Caco-2 (cell line): ENCODE measurements at regions of chr6 and their contacts with region 1.

Region 1: GRCh38 chr6:27188885-27189418 is 58.5 kb upstream of the PRSS16 start:
- DNase-seq: peak; percentile 59 to 82
- H3K4me3 ChIP-seq: peak overlapping the region; percentile 74
- H3K4me3 Mint-ChIP-seq: peak overlapping the region; percentile 98
- H3K27ac Mint-ChIP-seq: peak overlapping the region; percentile 98
- H3K4me1 ChIP-seq: peaks cover 16% of the 10 kb centered on the region
- H3K4me1 Mint-ChIP-seq: no peaks in the 10 kb centered on the region
- H3K27me3 ChIP-seq: no peaks in the 10 kb centered on the region
- H3K27me3 Mint-ChIP-seq: no peaks in the 10 kb centered on the region
- CTCF ChIP-seq: peak; percentile 54 to 86

Region 2: DNA sequence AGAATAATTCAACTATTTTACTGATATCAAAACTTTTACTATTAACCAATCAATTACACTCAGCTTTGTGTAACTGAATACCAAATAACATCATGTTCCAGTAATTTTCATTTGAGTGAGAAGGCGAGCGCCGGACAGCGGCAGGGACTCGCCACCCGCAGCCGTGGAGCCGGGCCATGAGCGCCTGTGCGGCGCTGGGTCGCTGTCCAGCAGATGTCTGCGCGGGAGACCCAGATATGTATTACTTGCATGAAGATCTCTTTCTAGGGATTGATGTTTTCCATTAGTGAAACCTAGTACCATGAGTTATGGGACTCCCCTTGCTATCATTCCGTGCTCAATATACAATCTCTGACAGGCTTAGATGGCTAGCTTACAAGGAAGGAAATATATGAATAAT is 186.5 kb before region 1 on chr6:
- CTCF ChIA-PET with region 1: no interaction called
- POLR2A ChIA-PET with region 1: no interaction called
- intact Hi-C with region 1: no loop called
- DNase-seq: no peak
- H3K4me3 ChIP-seq: no peak overlapping the region
- H3K4me3 Mint-ChIP-seq: no peak overlapping the region
- H3K27ac Mint-ChIP-seq: no peak overlapping the region
- H3K4me1 ChIP-seq: no peaks in the 10 kb centered on the region
- H3K4me1 Mint-ChIP-seq: no peaks in the 10 kb centered on the region
- H3K27me3 ChIP-seq: no peaks in the 10 kb centered on the region
- H3K27me3 Mint-ChIP-seq: no peaks in the 10 kb centered on the region
- CTCF ChIP-seq: no peak

Region 3: DNA sequence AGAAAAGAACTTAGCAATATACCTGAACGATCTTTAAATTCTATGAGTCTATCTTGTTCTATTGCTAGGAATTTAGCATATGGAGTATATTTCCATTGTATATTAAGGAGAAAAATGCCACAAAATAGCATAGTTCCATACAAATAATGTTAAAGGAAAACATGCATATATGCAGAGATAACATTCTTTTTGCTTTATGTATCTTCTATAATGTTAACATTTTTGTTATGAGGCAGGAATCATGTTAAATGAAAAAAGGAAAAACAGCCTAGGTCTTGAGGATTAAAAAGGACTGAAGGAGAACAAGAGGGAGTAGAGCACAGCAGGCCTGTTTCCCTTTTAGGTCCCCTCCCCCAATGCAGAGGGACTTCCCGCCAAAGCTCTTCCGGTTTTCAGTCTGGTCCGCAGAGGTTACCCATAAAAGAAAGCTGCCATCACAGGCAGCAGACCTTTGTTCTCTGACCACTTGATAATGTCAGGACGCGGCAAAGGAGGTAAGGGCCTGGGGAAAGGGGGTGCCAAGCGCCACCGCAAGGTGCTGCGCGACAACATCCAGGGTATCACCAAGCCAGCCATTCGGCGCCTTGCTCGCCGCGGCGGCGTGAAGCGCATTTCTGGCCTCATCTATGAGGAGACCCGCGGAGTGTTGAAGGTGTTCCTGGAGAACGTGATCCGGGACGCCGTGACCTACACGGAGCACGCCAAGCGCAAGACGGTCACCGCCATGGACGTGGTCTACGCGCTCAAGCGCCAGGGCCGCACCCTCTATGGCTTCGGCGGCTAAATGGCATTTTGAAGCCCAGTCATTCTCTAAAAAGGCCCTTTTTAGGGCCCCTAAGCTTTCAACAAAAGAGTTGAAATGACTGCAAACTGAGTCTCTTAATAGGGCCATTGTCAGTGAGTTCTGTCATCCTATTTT is 49.9 kb before region 1 on chr6:
- CTCF ChIA-PET with region 1: no interaction called
- POLR2A ChIA-PET with region 1: no interaction called
- intact Hi-C with region 1: no loop called
- DNase-seq: no peak
- H3K4me3 ChIP-seq: no peak overlapping the region
- H3K4me3 Mint-ChIP-seq: no peak overlapping the region
- H3K27ac Mint-ChIP-seq: peak overlapping the region; percentile 50
- H3K4me1 ChIP-seq: peaks cover 40% of the 10 kb centered on the region
- H3K4me1 Mint-ChIP-seq: peaks cover 14% of the 10 kb centered on the region
- H3K27me3 ChIP-seq: no peaks in the 10 kb centered on the region
- H3K27me3 Mint-ChIP-seq: no peaks in the 10 kb centered on the region
- CTCF ChIP-seq: no peak

Region 4: GRCh38 chr6:27177485-27178406 is 11.2 kb before region 1 on chr6:
- CTCF ChIA-PET with region 1: interaction called, 8 read pairs
- POLR2A ChIA-PET with region 1: interaction called, 19 read pairs
- intact Hi-C with region 1: loop called (anchors 1 kb)
- DNase-seq: peak; percentile 85 to 86
- H3K4me3 ChIP-seq: peak overlapping the region; percentile 94
- H3K4me3 Mint-ChIP-seq: peak overlapping the region; percentile 90
- H3K27ac Mint-ChIP-seq: peak overlapping the region; percentile 91
- H3K4me1 ChIP-seq: no peaks in the 10 kb centered on the region
- H3K4me1 Mint-ChIP-seq: peaks cover 6% of the 10 kb centered on the region
- H3K27me3 ChIP-seq: no peaks in the 10 kb centered on the region
- H3K27me3 Mint-ChIP-seq: no peaks in the 10 kb centered on the region
- CTCF ChIP-seq: peak; percentile 32 to 66

Region 5: DNA sequence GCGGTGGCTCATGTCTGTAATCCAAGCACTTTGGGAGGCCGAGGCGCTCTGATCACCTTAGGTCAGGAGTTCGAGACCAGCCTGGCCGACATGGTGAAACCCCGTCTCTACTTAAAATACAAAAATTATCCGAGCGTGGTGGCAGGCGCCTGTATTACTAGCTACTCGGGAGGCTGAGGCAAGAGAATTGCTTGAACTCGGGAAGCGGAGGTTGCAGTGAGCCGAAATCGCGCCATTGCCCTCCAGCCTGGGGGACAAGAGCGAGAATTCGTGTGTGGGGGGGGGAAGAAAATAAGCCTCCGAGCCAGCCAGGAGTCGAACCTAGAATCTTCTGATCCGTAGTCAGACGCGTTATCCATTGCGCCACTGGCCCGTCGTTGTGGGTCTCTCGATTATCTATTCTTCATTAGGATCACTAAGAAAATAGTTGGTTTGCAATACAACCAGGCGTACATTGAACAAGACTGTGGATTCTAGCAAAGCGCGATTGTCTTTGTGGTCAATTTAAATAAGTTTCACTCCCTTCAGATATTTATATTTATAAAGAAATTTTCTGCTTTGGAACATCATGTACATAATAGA is 24.7 kb after region 1 on chr6:
- CTCF ChIA-PET with region 1: no interaction called
- POLR2A ChIA-PET with region 1: no interaction called
- intact Hi-C with region 1: no loop called
- DNase-seq: no peak
- H3K4me3 ChIP-seq: no peak overlapping the region
- H3K4me3 Mint-ChIP-seq: no peak overlapping the region
- H3K27ac Mint-ChIP-seq: no peak overlapping the region
- H3K4me1 ChIP-seq: no peaks in the 10 kb centered on the region
- H3K4me1 Mint-ChIP-seq: no peaks in the 10 kb centered on the region
- H3K27me3 ChIP-seq: no peaks in the 10 kb centered on the region
- H3K27me3 Mint-ChIP-seq: no peaks in the 10 kb centered on the region
- CTCF ChIP-seq: no peak

Region 6: DNA sequence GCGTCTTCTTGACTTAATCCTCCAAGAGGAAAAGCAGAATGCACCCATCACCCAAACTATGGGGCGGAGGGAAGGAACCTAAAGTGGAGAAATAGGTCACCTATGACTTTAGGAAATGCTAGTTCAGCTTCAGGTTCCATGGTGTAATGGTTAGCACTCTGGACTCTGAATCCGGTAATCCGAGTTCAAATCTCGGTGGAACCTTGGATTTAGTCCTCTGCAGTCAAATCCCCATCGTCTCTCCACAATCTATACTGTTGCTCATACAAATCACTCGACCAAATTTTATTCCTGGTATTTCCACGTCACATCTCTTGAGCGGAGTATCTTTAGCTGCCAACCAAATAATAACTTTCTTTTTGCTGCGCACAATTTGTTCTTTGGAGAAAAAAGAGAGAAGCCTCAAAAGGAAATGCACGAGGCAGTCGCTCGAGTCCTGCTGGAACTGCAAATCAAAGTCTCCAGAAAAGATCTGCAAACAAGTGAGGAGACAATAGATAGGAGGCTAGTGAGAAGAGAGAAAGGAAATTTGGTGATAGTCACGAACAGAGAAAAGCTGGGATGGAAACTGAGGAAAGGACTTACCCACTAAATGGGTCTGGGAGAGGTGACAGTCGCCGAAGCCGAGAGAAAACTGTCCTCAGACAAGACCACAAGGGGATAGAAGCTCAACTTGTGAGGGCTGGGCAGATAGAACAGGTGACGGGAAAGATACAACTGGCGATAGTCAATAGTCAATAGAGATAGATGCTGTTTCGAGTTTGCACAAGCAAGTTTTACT is 106.5 kb after region 1 on chr6:
- CTCF ChIA-PET with region 1: no interaction called
- POLR2A ChIA-PET with region 1: interaction called, 9 read pairs
- intact Hi-C with region 1: loop called (anchors 5 kb)
- DNase-seq: peak; percentile 59 to 71
- H3K4me3 ChIP-seq: peak overlapping the region; percentile 41
- H3K4me3 Mint-ChIP-seq: peak overlapping the region; percentile 97
- H3K27ac Mint-ChIP-seq: peak overlapping the region; percentile 77
- H3K4me1 ChIP-seq: 0 out of 2 replicates have a peak, but pooled peaks cover 5% of the 10 kb centered on the region
- H3K4me1 Mint-ChIP-seq: peaks cover 16% of the 10 kb centered on the region
- H3K27me3 ChIP-seq: no peaks in the 10 kb centered on the region
- H3K27me3 Mint-ChIP-seq: peaks cover 7% of the 10 kb centered on the region
- CTCF ChIP-seq: no peak

Region 7: DNA sequence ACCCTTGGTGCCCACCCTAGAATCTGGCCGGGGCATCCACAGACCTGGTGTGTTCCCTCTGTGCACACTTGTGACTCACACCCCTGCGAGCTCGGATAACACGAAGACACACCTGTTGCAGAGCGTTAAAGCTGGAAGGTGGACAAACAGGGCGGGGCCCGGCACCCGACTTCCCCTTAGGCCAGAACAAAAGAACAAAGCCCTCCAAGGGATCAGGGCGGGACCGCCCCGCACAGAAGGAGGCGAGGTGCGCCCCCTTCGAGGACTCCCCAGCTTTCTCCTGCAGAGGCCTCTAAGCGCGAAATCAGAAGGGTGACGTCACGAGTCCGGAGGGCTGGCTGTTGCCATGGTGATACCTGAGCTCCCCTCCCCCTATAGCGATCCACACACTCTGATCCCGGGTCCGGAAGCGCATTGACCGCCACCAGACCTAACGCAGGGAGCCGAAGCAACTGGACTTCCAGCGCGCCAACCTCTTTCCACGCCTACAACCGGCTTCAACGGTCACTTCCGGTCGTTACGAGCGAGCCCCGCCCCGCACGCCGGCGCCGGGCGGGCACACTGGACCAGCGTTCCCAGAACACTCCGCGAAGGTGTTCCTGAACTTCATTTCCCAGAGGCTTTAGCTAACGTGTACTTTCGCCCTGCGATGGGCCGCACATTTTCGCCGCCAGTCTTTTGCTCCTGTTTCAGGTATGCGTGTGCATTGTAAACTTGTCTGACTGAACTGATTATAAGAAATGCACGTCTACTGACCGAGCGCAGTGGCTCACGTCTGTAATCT is 283.9 kb after region 1 on chr6 and contains the start of gene ZNF184:
- CTCF ChIA-PET with region 1: no interaction called
- POLR2A ChIA-PET with region 1: interaction called, 6 read pairs
- intact Hi-C with region 1: loop called (anchors 1 kb)
- DNase-seq: peak; percentile 97 to 98
- H3K4me3 ChIP-seq: peak within 1 kb of the TSS; percentile 69
- H3K4me3 Mint-ChIP-seq: peak within 1 kb of the TSS; percentile 96
- H3K27ac Mint-ChIP-seq: peak within 1 kb of the TSS; percentile 95
- H3K4me1 ChIP-seq: peaks cover 3% of the 10 kb centered on the region; the same call in 1 of the 2 replicates
- H3K4me1 Mint-ChIP-seq: peaks cover 6% of the 10 kb centered on the region
- H3K27me3 ChIP-seq: no peaks in the 10 kb centered on the region
- H3K27me3 Mint-ChIP-seq: no peaks in the 10 kb centered on the region
- CTCF ChIP-seq: peak in 1 of 2 experiments; percentile 18
- total RNA-seq, gene ZNF184: 3.9 and 4.4 TPM in 2 replicates

Region 8: GRCh38 chr6:27541212-27541931 is 352.4 kb after region 1 on chr6:
- CTCF ChIA-PET with region 1: no interaction called
- POLR2A ChIA-PET with region 1: no interaction called
- intact Hi-C with region 1: no loop called
- DNase-seq: peak in 1 of 2 experiments; percentile 23
- H3K4me3 ChIP-seq: no peak overlapping the region
- H3K4me3 Mint-ChIP-seq: peak overlapping the region; percentile 44
- H3K27ac Mint-ChIP-seq: no peak overlapping the region
- H3K4me1 ChIP-seq: no peaks in the 10 kb centered on the region; the same call in 1 of the 2 replicates
- H3K4me1 Mint-ChIP-seq: no peaks in the 10 kb centered on the region
- H3K27me3 ChIP-seq: no peaks in the 10 kb centered on the region
- H3K27me3 Mint-ChIP-seq: no peaks in the 10 kb centered on the region
- CTCF ChIP-seq: no peak

Region 9: DNA sequence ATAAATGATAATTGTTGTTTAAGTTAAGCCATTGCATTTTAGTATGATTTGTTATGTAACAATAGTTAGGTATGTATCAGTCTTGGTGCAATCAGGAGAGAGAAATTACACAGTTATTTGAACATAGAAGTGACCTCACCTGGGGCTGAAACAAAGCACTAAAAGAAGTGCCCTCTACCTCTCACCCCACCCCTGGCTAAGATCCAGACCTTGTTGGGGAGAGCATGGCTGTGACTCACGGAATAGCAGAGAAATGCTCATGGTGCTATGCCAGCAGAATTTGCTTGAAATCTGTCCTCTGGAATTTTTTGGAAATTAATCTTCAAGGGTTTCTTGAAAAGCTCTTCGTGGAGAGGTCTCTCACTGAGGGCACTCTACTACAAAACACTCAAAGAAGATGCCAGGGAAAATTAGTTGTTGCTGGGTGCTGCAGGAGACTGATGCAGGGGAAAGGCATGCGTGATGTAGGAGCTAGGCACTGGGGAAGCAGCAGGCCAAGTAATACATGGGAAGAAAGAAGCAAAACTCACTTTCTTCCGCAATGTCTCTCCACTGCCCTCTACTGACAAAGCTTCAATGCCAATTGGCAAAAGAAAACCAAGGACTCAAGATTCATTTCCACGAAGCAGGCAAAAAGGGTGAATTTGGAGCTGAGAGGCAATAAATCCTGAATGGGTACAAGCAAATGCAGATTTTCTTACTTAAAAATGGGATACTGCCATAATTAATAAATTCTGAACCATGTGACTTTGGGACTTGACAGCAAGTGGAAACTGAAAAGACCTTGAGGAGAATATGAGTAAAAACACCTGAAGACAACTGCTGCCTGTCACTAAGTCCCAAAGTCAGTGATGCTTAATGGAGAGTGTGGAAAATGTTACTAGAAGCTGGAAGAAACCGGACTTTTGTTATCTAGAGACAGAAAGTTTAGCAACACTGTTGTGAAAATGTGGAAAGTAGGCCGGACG is 420.2 kb after region 1 on chr6:
- CTCF ChIA-PET with region 1: interaction called, 7 read pairs
- POLR2A ChIA-PET with region 1: no interaction called
- intact Hi-C with region 1: loop called (anchors 2 kb)
- DNase-seq: peak in 1 of 2 experiments; percentile 69
- H3K4me3 ChIP-seq: no peak overlapping the region
- H3K4me3 Mint-ChIP-seq: no peak overlapping the region
- H3K27ac Mint-ChIP-seq: no peak overlapping the region
- H3K4me1 ChIP-seq: no peaks in the 10 kb centered on the region
- H3K4me1 Mint-ChIP-seq: peaks cover 9% of the 10 kb centered on the region
- H3K27me3 ChIP-seq: no peaks in the 10 kb centered on the region
- H3K27me3 Mint-ChIP-seq: peaks cover 2% of the 10 kb centered on the region
- CTCF ChIP-seq: peak; percentile 61 to 79

Region 10: GRCh38 chr6:27687154-27688013 is 498.4 kb after region 1 on chr6:
- CTCF ChIA-PET with region 1: no interaction called
- POLR2A ChIA-PET with region 1: interaction called, 5 read pairs
- intact Hi-C with region 1: loop called (anchors 1 kb)
- DNase-seq: peak; percentile 85 to 87
- H3K4me3 ChIP-seq: peak overlapping the region; percentile 51
- H3K4me3 Mint-ChIP-seq: peak overlapping the region; percentile 78
- H3K27ac Mint-ChIP-seq: peak overlapping the region; percentile 60
- H3K4me1 ChIP-seq: no peaks in the 10 kb centered on the region
- H3K4me1 Mint-ChIP-seq: peaks cover 8% of the 10 kb centered on the region
- H3K27me3 ChIP-seq: no peaks in the 10 kb centered on the region
- H3K27me3 Mint-ChIP-seq: no peaks in the 10 kb centered on the region
- CTCF ChIP-seq: peak; percentile 63 to 81